Activated CD4-positive, alpha-beta memory T cell treated with anti-CD3 and anti-CD28 coated beads, Interleukin-2, amount 10 ng/mL, durations not matched to agents 7 days and 5 days (primary cell): ENCODE measurements at regions of chr1 and their contacts with region 1.

Region 1: DNA sequence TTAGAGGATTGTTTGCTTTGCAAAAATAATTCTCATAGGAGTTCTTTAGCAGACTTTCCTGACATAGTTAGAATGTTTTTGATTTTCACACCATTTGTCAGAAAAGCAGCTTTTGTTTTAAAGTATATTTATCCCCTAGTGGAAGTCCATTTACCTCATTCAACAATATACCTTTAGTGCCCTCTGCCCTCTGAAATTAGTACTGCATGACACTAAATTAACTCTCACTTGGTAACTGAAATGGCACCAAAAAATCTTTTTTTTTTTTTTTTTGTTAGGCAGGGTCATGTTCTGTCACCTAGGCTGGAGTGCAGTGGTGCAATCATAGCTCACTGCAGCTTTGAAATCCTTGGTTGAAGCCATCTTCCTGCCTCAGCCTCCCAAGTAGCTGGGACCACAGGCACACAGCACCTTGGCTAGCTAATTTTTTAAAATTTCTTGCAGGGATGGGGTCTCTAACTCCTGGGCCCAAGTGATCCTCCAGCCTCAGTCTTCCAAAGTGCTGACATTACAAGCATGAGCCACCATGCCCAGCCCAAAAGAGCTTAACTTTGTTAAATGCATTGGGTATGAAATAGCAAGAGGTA is 13.6 kb downstream of the LRRC42 start:
- DNase-seq: no peak
- H3K4me3 Mint-ChIP-seq: no peak overlapping the region
- H3K27ac Mint-ChIP-seq: no peak overlapping the region
- H3K4me1 Mint-ChIP-seq: peaks cover 23% of the 10 kb centered on the region
- H3K27me3 Mint-ChIP-seq: no peaks in the 10 kb centered on the region

Region 2: GRCh38 chr1:53878492-53879105 is 81.2 kb before region 1 on chr1:
- CTCF ChIA-PET with region 1: interaction called, 30 read pairs
- POLR2A ChIA-PET with region 1: no interaction called
- DNase-seq: no peak
- H3K4me3 Mint-ChIP-seq: no peak overlapping the region
- H3K27ac Mint-ChIP-seq: no peak overlapping the region
- H3K4me1 Mint-ChIP-seq: no peaks in the 10 kb centered on the region
- H3K27me3 Mint-ChIP-seq: no peaks in the 10 kb centered on the region

Region 3: DNA sequence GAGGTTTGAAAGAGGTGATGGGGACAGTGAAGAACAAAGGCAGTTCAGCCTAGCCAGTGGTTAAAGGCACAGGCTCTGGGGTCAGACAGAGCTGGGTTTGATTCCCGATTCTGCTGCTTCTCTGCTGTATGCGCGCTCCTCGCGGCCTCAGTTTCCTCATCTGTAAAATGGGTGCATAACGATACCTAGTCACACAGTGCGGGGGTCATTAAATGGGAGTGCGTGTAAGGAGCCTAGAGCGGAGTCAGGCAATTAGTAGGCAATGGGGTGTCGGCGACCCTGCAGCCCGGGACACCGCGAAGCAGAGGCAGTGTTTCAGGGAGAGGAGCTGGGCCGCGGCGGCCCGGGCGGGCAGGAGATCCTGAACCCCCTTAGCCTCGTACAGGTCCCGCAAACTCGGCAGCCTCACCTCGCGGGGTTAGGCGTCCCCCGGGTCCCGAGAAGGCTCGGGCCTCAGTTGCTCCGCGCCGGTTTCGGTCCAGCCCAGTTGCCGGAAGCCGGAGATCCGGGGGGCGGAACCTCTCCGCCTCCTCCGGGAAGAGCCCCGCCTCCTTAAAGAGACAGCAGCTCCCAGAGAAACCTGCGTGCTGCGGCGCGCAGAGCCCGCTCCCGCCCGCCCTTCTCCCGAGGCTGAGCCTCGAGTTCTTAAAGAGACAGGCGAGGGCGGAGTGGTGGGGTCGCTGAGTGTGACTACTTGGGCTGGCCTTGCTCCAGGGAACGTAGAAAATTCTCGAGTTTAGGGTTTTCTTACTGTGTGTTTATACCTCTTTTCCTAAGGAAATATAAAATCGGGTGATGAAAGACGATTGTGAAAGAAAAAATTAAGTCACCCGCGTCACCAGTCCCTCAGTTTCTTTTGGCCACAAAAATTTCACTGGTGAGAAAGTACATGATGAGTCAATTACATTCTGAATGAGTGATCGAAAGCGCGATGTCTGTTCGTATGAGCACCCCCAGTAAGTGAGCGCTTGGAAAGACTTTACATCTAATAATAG is 70.2 kb before region 1 on chr1 and contains the start of gene YIPF1:
- CTCF ChIA-PET with region 1: interaction called, 10 read pairs
- POLR2A ChIA-PET with region 1: interaction called, 3 read pairs
- DNase-seq: peak; percentile 91
- H3K4me3 Mint-ChIP-seq: peak within 1 kb of the TSS; percentile 94
- H3K27ac Mint-ChIP-seq: peak within 1 kb of the TSS; percentile 80
- H3K4me1 Mint-ChIP-seq: peaks cover 31% of the 10 kb centered on the region
- H3K27me3 Mint-ChIP-seq: peaks cover 3% of the 10 kb centered on the region
- total RNA-seq, gene YIPF1: 17.8 to 19.7 TPM

Region 4: DNA sequence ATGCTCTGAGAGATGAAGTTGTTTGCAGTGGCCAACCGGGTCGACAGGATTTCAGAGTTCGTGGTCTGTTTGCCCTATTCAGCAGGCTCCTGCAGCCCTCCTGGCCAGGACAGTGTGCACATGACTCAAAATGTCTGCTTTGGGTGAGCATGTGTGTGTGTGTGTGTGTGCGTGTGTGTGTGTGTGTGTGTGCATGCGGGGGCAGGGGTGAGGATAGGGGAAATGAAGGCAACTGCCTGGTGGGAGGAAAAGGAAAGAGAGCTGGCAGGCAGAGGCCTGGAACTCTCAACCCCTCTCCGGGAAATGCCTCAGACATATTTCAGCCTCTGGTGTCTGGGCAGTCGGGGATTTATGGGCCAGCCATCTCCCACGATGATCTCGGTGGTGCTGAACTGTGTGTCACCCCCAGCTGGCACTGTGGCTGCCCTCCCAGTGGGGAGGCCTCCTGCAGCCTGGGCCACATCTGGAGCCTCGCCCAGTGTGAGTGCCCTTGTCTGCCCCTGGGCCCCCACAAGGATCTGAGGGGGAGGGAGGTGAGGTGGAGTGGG is 177.8 kb after region 1 on chr1:
- CTCF ChIA-PET with region 1: no interaction called
- POLR2A ChIA-PET with region 1: no interaction called
- DNase-seq: no peak
- H3K4me3 Mint-ChIP-seq: no peak overlapping the region
- H3K27ac Mint-ChIP-seq: no peak overlapping the region
- H3K4me1 Mint-ChIP-seq: no peaks in the 10 kb centered on the region
- H3K27me3 Mint-ChIP-seq: no peaks in the 10 kb centered on the region